Dendritic cell treated with granulocyte-macrophage colony-stimulating factor and Interleukin-4, amounts not matched to agents 40 ng/mL and 50 ng/mL, for 4 days (primary cell): ENCODE measurements at regions of chr2 and their contacts with region 1.

Region 1: DNA sequence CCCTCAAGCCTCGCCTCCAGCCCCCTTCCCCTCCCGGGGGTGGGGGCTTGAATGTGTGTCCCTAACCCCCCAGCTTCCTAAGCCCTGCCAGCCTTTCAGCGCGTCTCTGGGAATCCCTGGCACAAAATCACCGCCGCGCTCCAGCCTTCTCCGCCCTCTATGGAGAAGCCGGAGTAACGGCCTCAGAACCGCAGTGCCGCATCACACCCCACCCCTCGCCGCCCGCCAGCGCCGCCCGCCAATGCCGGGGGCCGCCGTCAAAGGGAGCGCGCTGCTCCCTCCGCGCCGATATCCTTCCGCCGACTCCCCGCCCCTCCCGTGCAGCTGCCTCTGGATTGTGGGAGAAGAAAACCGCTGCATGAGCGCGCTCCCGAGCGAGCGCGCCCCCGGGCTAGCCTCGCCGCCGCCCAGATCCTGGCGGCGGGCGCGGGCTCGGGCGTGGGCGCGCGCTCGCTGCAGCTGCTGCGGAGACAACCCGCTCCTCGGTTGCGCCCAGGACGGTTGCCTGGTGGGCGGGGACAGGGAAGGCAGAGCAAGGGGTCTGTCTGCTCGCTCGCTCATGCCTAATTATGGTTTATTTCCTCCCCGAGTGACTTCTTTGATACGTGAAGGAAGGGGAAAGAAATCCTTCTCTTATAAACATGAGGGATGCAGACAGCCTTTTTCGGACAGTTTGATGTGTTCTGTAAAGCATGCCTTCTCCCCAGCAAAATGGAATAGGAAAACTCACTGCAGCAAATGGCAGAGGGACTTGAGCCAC is at the start of gene CCDC88A:
- H3K4me3 Mint-ChIP-seq: peak within 1 kb of the TSS; percentile 99
- H3K27ac Mint-ChIP-seq: peak within 1 kb of the TSS; percentile 98
- H3K4me1 Mint-ChIP-seq: peaks cover 51% of the 10 kb centered on the region
- H3K27me3 Mint-ChIP-seq: no peaks in the 10 kb centered on the region

Region 2: DNA sequence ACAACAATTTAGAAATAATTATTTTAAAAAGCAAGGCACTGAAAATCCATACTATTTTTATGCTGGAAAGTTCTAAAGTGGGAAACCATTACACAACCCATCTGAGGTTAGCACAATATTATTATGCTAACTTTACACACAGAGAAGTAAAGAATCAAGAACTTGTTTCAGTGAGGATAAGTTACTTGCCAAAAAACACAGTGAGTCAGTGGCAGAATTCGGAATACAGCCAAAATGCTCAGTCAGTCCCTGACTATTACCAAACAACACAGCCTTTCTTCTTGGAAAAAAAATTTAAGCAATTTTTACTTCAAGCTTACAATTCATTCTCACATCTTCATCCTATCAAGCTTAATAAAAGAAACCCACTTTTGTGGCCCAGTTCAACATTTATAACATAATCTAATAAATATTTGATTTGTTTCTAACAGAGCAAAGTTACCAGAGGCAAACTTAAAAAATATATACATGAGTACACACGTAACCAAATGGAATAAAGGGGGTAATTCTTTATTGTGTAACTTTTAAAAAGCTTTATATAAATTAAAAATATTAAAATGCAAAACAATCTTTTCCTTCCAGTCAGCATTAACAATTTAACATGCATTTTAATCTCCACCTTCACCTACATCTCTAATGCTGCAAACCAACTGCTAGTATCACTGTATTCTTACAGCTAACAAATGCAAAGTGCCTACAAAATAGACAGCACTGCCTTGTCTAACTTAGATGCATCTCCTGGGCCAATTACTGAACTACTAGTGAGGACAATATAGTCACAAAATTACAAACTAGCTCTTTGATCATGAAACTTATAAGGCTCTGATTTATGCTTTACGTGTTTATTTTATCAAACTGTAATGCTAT is 55.4 kb before region 1 on chr2:
- intact Hi-C with region 1: loop called (anchors 10 kb)
- H3K4me3 Mint-ChIP-seq: no peak overlapping the region
- H3K27ac Mint-ChIP-seq: no peak overlapping the region
- H3K4me1 Mint-ChIP-seq: peaks cover 7% of the 10 kb centered on the region
- H3K27me3 Mint-ChIP-seq: no peaks in the 10 kb centered on the region

Region 3: GRCh38 chr2:55452879-55453278 is 33.0 kb after region 1 on chr2:
- intact Hi-C with region 1: no loop called
- H3K4me3 Mint-ChIP-seq: no peak overlapping the region
- H3K27ac Mint-ChIP-seq: no peak overlapping the region
- H3K4me1 Mint-ChIP-seq: no peaks in the 10 kb centered on the region
- H3K27me3 Mint-ChIP-seq: no peaks in the 10 kb centered on the region

Region 4: GRCh38 chr2:55519938-55520885 is 100.4 kb after region 1 on chr2:
- intact Hi-C with region 1: loop called (anchors 2 kb)
- H3K4me3 Mint-ChIP-seq: peak overlapping the region; percentile 90
- H3K27ac Mint-ChIP-seq: peak overlapping the region; percentile 95
- H3K4me1 Mint-ChIP-seq: peaks cover 19% of the 10 kb centered on the region
- H3K27me3 Mint-ChIP-seq: no peaks in the 10 kb centered on the region